ENCODE measurements at regions of chr2 and their contacts with region 1.

Region 1: DNA sequence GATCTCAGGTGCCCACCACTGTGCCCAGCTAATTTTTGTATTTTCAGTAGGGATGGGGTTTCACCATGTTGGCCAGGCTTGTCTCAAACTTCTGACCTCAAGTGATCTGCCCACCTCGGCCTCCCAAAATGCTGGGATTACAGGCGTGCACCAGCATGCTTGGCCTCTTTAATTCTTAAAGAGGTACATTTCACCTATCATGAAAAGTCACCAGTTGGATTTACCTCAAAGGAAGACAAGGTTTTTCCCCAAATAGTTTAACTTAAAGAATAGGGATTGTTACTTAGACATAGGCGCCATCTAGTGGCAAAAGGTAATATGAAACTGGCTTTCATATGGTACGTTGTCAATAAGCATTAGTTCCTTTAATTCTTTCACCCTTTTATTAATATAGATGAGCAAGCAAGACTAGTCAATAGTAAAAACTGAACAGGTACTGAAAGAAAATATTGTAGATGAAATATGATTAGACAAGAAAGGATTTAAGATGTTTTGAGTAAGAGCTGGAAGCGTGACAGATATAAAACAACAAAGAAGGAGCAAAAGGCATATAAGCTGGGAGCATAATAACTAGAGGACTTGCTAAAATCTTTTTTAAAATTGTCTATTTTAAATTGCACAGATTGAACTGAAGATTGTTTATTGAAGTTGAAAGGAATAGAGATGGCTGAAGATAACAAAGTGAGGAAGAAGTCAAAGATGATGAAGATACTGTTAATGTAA is 35.0 kb upstream of the PSMD14 start:
- DNase-seq: no peak
- ATAC-seq: peak; percentile 61
- H3K4me3 Mint-ChIP-seq: no peak overlapping the region
- H3K27ac Mint-ChIP-seq: no peak overlapping the region
- H3K4me1 Mint-ChIP-seq: no peaks in the 10 kb centered on the region
- H3K27me3 Mint-ChIP-seq: peaks cover 4% of the 10 kb centered on the region

Region 2: DNA sequence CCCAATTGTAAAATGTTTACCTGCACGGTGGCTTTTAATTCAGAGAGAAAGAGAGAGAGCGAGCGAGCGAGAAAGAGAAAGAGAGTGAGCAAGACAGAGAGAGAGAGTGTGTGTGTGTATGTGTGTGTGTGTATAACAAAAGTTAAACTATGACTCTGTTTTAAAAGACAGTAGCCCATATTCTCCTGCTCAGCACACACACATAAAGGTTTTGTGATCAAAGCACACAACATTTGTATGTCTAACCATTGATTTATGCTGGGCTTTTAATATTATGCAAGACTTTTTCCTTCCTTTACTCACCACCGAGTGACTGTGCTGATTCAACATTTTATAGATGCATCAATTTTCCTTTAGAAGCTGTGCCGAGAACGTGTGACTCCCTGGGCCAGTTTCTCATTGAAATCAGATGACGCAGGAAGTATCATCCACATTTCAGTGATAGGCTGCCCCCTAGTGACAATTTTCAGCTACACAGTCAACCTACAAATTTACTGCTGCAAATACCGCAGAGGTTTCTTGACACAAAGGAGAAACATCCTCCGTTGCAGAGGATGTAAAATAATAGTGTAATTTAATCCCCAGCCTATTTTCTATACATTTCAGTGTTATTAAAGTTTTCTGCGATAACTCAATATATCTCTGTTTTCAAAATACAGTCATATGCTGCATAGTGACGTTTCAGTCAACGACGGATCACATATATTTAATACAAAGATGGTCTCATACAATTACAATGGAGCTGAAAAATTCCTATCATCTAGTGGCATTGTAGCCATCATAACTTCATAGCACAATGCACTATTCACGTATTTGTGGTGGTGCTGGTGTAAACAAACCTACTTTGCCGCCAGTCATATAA is 278.8 kb before region 1 on chr2:
- CTCF ChIA-PET with region 1: interaction called, 4 read pairs
- POLR2A ChIA-PET with region 1: no interaction called
- intact Hi-C with region 1: loop called (anchors 5 to 10 kb)
- DNase-seq: peak; percentile 79
- ATAC-seq: peak; percentile 94
- H3K4me3 Mint-ChIP-seq: no peak overlapping the region
- H3K27ac Mint-ChIP-seq: no peak overlapping the region
- H3K4me1 Mint-ChIP-seq: peaks cover 10% of the 10 kb centered on the region
- H3K27me3 Mint-ChIP-seq: no peaks in the 10 kb centered on the region

Region 3: DNA sequence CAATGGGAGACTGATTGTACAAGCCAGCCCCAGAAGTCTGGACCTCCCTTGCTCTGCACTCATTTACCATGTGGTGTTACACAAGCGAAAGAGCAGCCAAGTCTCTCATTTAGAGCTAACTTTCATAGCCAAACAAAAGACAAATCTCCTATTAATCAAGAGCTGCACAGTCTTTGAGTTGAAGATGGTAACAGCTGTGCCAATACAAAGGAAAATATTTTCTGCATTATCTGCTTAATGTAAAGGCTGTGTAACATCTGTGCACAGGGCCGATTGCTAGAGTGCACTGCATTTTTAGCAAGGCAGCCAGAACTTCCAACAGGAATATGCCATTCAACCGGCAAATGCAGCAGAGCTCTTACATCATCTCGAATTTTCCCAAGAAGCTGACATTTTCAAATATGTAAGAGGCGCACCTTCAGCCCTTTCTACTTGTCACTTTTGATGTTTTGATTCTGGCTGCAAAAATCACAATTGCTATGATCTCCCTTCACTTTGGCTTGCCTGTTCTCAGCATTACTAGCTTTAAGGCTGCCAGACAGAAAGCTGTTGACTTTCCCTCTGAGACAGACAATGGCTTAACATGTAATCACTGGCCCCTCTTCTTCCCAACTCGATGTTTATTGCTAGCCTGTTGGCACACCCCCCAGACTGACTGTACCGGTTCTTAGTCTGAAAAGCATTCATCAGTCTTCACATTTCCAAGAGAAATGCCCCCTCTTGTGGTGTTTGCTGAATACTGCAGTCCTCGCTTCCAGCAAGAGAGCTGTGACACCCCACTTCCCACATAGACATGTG is 209.8 kb before region 1 on chr2:
- CTCF ChIA-PET with region 1: interaction called, 16 read pairs
- POLR2A ChIA-PET with region 1: no interaction called
- intact Hi-C with region 1: loop called (anchors 1 to 10 kb)
- DNase-seq: peak; percentile 78
- ATAC-seq: peak; percentile 90
- H3K4me3 Mint-ChIP-seq: no peak overlapping the region
- H3K27ac Mint-ChIP-seq: no peak overlapping the region
- H3K4me1 Mint-ChIP-seq: peaks cover 7% of the 10 kb centered on the region
- H3K27me3 Mint-ChIP-seq: no peaks in the 10 kb centered on the region

Region 4: DNA sequence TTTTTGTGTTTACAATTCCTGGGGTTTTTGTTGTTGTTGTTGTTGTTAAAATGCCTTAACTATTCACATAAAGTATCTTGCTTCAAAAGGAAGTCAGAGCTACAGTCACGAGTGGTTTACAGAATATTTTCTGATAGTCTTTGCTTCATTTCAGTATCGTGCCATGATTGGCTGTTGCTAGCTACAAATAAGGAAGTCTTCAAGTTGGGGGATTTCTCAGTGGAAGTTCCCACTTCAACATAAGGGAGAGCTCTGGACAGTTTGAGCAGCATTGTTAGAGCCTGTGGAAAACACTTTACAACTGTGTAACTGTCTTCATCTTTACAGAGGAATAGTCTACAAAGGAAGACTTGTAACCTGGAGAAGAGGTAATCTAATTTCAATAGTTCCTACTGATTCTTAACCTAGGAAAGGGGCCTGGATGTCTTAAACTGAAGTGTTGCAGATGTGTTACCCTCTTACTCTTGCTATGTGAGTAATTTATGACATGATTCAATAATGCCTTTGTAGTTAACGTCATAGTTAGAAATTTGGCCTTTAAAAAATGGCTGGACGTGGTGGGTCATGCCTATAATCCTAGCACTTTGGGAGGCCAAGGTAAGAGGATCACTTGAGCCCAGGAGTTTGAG is 136.4 kb before region 1 on chr2:
- CTCF ChIA-PET with region 1: no interaction called
- POLR2A ChIA-PET with region 1: no interaction called
- intact Hi-C with region 1: no loop called
- DNase-seq: peak; percentile 30
- ATAC-seq: peak; percentile 82
- H3K4me3 Mint-ChIP-seq: peak overlapping the region; percentile 83
- H3K27ac Mint-ChIP-seq: peak overlapping the region; percentile 98
- H3K4me1 Mint-ChIP-seq: peaks cover 52% of the 10 kb centered on the region
- H3K27me3 Mint-ChIP-seq: no peaks in the 10 kb centered on the region

Region 5: DNA sequence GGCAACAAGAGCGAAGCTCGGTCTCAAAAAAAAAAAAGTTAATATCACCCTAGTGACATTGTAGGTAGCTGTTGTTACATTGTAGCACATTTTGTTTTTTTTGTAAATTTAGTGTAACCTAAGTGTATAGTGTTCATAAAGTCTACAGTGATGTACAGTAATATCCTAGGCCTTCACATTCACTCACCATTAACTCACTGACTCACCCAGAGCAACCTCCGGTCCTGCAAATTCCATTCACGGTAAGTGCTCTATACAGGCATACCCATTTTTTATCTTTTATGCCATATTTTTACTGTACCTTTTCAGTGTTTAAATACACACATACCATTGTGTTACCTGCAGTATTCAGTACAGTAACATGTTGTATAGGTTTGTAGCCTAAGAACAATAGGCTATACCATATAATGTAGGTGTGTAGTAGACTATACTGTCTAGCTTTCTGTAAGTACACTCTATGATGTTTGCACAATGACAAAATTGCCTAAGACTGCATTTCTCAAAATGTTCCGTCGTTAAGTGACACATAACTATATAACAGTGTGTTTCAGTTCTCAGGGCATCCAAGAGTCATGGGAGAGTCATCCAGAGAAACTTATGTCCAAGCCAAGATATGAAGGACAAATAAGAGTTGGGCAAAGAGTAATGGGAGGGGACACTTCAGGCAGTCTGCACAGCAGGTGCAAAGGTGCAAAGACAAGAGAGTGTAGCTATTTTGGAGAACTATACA is 44.5 kb before region 1 on chr2:
- CTCF ChIA-PET with region 1: interaction called, 81 read pairs
- POLR2A ChIA-PET with region 1: no interaction called
- intact Hi-C with region 1: loop called (anchors 1 kb)
- DNase-seq: no peak
- ATAC-seq: peak; percentile 9
- H3K4me3 Mint-ChIP-seq: no peak overlapping the region
- H3K27ac Mint-ChIP-seq: no peak overlapping the region
- H3K4me1 Mint-ChIP-seq: no peaks in the 10 kb centered on the region
- H3K27me3 Mint-ChIP-seq: no peaks in the 10 kb centered on the region

Region 6: DNA sequence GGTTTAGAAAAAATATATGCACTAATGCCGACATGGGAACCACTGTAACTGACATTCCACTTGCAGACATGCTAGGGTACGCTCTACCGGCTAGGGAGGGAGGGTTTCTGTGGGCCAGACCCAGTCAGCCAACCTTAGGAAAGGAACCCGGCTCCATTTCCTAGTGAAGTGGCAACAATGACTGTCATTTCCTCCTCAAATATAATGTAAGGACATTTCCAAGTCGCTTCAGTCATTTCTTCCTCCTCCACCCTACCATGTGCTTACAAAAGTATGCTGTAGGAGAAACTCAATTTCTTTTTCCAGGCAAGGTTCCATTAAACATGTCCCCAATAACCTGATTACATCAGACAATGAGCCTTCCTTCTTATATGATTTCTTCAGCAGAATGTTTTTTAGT is 29.3 kb before region 1 on chr2:
- CTCF ChIA-PET with region 1: interaction called, 9 read pairs
- POLR2A ChIA-PET with region 1: no interaction called
- intact Hi-C with region 1: loop called (anchors 2 kb)
- DNase-seq: peak; percentile 53
- ATAC-seq: peak; percentile 20
- H3K4me3 Mint-ChIP-seq: peak overlapping the region; percentile 91
- H3K27ac Mint-ChIP-seq: peak overlapping the region; percentile 98
- H3K4me1 Mint-ChIP-seq: peaks cover 56% of the 10 kb centered on the region
- H3K27me3 Mint-ChIP-seq: no peaks in the 10 kb centered on the region

Region 7: DNA sequence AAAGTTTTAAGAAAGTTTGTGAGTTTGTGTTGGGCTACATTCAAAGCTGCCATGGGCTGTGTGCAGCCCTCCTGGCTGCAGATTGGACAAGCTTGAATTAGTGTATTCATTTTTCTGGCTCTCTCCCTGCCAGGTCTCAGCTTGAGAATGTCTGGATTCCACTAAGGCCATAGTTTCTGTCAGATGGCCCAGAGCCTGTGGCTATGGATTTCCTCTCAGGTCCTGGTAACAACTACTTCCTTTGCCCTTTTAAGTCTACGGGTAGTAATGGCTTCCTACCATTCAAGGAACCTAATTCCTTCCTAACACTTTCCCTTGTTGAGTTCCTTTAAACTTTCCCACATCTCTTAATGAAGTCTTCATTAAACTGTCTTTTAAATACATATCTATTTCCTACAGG is 10.7 kb after region 1 on chr2:
- CTCF ChIA-PET with region 1: interaction called, 10 read pairs
- POLR2A ChIA-PET with region 1: no interaction called
- intact Hi-C with region 1: no loop called
- DNase-seq: no peak
- ATAC-seq: no peak
- H3K4me3 Mint-ChIP-seq: no peak overlapping the region
- H3K27ac Mint-ChIP-seq: no peak overlapping the region
- H3K4me1 Mint-ChIP-seq: no peaks in the 10 kb centered on the region
- H3K27me3 Mint-ChIP-seq: peaks cover 5% of the 10 kb centered on the region

Region 8: DNA sequence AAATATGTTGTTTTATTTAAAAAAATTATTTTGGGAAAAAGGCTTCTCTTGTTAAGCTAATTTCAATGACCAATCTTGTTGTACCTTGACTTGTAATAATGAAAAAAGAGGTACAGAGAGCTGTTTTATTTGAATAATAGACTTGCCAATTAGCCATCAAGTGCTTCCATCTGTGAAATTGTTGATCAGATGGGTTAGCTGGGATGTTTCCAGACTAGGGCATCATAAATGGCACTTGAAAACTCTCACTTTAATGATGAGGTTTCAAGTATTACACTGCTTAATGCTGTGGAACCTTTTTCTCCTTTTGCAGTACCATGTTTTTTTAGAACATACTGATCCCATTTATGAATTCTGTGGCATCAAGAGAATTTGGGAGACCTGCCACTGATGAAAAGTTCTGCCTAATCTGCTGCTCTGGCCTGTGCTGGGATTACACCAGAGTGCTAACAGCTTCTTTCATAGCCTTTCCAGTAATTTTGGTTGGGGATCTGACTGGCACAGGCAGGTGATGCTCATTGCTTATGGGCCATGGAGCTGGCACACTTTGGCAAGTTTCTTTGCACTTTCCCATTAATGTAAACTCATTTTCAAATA is 59.3 kb after region 1 on chr2:
- CTCF ChIA-PET with region 1: no interaction called
- POLR2A ChIA-PET with region 1: no interaction called
- intact Hi-C with region 1: no loop called
- DNase-seq: no peak
- ATAC-seq: no peak
- H3K4me3 Mint-ChIP-seq: no peak overlapping the region
- H3K27ac Mint-ChIP-seq: no peak overlapping the region
- H3K4me1 Mint-ChIP-seq: peaks cover 3% of the 10 kb centered on the region
- H3K27me3 Mint-ChIP-seq: no peaks in the 10 kb centered on the region

Region 9: DNA sequence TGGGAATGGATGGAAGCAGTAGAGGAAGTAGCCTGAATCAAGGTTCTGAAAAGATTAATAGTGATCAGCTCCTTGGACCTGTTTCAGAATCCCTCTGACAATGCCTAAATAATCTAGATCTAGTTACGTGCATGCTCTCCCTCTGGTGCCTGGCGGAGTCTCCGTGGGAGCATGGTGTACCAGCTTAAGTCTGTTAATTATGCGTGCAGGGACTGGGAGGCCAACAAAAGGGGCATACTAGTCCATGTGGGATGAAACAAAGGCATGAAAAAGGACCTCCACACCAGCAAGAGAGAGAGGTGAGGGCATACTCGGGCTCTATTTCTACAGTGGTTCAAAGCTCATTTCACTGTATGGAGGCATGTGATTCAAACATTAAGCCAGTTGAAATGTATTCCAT is 600.5 kb after region 1 on chr2:
- CTCF ChIA-PET with region 1: no interaction called
- POLR2A ChIA-PET with region 1: no interaction called
- intact Hi-C with region 1: no loop called
- DNase-seq: no peak
- ATAC-seq: no peak
- H3K4me3 Mint-ChIP-seq: no peak overlapping the region
- H3K27ac Mint-ChIP-seq: no peak overlapping the region
- H3K4me1 Mint-ChIP-seq: peaks cover 2% of the 10 kb centered on the region
- H3K27me3 Mint-ChIP-seq: peaks cover 5% of the 10 kb centered on the region

Measured in activated CD4-positive, alpha-beta T cell treated with anti-CD3 and anti-CD28 coated beads for 36 hours (primary cell).